ENCODE measurements at regions of chr6 and their contacts with region 1.

Region 1: GRCh38 chr6:159654483-159655098 is 38.5 kb downstream of the SOD2 start:
- DNase-seq: no peak
- ATAC-seq: no peak
- H3K4me3 Mint-ChIP-seq: no peak overlapping the region
- H3K27ac Mint-ChIP-seq: no peak overlapping the region
- H3K4me1 Mint-ChIP-seq: no peaks in the 10 kb centered on the region
- H3K27me3 Mint-ChIP-seq: peaks cover 2% of the 10 kb centered on the region

Region 2: DNA sequence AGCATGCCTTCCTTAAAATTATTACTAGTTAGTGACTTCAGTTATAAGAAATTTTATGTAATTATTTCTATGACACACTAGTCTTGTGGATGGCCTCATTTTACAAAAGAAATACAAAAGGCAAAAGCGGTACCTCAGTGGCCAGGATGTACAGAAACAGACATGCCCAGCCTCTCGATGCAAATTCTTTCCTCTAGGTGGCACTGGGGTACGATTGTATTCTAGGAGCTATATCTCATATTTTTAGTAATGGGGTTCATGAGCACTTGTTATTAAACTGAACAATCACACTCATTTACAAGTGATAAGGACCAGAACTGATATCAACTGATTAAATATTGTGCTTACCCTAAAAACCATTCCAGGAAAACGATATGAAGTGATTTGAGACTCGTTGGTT is 21.4 kb before region 1 on chr6:
- CTCF ChIA-PET with region 1: interaction called, 18 read pairs
- POLR2A ChIA-PET with region 1: no interaction called
- DNase-seq: no peak
- ATAC-seq: no peak
- H3K4me3 Mint-ChIP-seq: no peak overlapping the region
- H3K27ac Mint-ChIP-seq: no peak overlapping the region
- H3K4me1 Mint-ChIP-seq: no peaks in the 10 kb centered on the region
- H3K27me3 Mint-ChIP-seq: no peaks in the 10 kb centered on the region

Region 3: DNA sequence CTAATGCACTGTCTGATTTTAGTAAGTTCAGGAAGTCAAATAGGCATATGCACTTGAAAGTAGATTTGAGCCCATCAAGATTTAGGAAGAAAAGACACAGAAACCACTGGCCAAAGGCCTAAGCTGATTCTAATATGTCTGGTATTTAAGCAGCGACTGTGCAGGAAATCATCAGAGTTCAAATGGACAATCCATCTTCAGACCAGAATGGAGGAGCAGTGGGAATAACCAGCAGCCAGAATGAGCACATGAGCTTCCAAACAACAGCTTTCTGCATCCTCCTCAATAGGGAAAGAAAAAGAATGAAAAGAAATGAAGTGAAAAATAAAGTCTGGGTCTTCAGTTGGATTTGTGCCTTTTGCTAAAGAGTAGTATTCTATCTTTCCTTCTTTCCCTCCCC is 12.1 kb before region 1 on chr6:
- CTCF ChIA-PET with region 1: interaction called, 10 read pairs
- POLR2A ChIA-PET with region 1: no interaction called
- DNase-seq: no peak
- ATAC-seq: no peak
- H3K4me3 Mint-ChIP-seq: no peak overlapping the region
- H3K27ac Mint-ChIP-seq: no peak overlapping the region
- H3K4me1 Mint-ChIP-seq: peaks cover 1% of the 10 kb centered on the region
- H3K27me3 Mint-ChIP-seq: no peaks in the 10 kb centered on the region